ENCODE measurements at regions of chr2 and their contacts with region 1.

Region 1: DNA sequence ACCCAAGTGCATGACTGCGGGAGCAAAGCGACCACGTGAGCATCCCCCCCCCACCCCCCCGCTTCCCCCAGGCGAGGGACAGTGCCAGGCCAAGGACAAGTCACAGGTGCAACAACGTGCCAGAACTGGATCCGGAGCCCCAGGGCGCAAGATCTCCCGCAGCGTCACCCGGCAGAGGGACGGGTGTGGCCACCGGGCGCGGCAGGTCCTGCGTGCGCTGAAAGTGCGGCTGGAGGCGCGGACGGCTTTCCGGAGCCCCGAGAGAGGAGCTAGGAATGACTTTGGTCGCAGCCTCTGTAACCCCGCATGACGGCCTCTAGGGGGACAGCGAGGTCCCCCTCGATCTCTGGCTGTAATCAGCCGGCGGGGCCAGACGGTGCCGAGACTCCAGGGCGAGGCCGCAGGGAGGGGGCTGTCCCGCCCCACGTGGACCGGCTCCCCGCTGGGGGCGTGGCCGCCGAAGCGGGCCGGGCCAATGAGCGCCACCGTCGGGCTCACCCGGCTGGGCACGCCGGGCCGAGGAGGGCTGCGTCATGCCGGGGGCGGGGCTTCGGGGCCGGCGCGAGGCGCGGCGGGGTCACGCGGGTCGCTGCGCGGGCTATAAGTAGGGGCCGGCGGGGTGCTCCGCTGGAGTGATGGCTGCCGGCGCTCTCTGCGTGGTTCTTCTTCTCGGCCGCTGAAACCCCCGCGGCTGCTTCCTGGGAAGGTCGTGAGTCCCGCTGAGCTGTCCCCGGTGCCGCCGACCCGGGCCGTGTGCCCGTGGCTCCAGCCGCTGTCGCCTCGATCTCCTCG is at the start of gene SLC20A1:
- DNase-seq: peak; percentile 98
- H3K4me3 Mint-ChIP-seq: peak within 1 kb of the TSS; percentile 97
- H3K27ac Mint-ChIP-seq: peak within 1 kb of the TSS; percentile 86
- H3K4me1 Mint-ChIP-seq: peaks cover 65% of the 10 kb centered on the region
- H3K27me3 Mint-ChIP-seq: no peaks in the 10 kb centered on the region
- total RNA-seq, gene SLC20A1: 152 to 158 TPM

Region 2: DNA sequence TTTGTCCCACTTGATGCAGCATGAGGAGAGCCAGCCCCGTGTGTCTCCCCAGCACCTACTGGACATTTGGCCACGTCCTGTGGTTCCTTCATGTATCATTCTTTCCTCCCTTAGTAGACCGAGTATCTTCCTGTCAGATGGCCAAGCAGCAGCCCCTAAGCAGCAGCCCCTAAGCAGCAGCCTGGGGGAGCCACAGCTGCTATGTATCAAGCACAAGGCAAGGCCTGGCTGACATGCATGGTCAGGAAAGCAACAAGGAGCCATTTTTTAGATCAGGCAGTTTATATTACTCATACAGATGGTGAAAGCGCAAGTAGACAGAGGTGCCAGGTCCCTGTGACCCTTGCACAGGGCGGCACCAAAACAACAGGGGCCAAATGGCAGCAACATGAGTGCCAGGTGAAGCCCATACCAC is 39.0 kb before region 1 on chr2:
- CTCF ChIA-PET with region 1: interaction called, 5 read pairs
- POLR2A ChIA-PET with region 1: interaction called, 29 read pairs
- DNase-seq: no peak
- H3K4me3 Mint-ChIP-seq: no peak overlapping the region
- H3K27ac Mint-ChIP-seq: no peak overlapping the region
- H3K4me1 Mint-ChIP-seq: peaks cover 7% of the 10 kb centered on the region
- H3K27me3 Mint-ChIP-seq: peaks cover 17% of the 10 kb centered on the region

Region 3: DNA sequence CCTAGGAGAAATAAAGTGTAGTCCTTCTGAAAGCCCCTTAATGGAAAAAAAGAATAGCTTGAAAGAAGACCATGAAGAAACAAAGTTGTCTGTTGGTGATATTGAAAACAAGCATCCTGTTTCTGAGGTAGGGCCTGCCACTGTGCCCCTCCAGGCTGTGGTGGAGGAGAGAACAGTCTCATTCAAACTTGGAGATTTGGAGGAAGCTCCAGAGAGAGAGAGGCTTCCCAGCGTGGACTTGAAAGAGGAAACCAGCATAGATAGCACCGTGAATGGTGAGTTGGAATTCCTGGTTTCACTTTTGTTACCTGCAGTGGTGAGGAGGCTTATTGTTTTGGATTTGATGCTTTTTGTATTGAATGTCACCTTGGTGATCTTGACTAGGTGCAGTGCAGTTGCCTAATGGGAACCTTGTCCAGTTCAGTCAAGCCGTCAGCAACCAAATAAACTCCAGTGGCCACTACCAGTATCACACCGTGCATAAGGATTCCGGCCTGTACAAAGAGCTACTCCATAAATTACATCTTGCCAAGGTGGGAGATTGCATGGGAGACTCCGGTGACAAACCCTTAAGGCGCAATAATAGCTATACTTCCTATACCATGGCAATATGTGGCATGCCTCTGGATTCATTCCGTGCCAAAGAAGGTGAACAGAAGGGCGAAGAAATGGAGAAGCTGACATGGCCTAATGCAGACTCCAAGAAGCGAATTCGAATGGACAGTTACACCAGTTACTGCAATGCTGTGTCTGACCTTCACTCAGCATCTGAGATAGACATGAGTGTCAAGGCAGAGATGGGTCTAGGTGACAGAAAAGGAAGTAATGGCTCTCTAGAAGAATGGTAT is 13.5 kb after region 1 on chr2:
- CTCF ChIA-PET with region 1: interaction called, 3 read pairs
- POLR2A ChIA-PET with region 1: interaction called, 73 read pairs
- DNase-seq: no peak
- H3K4me3 Mint-ChIP-seq: no peak overlapping the region
- H3K27ac Mint-ChIP-seq: peak overlapping the region; percentile 71
- H3K4me1 Mint-ChIP-seq: peaks cover 77% of the 10 kb centered on the region
- H3K27me3 Mint-ChIP-seq: no peaks in the 10 kb centered on the region

Region 4: GRCh38 chr2:112685271-112685884 is 39.9 kb after region 1 on chr2:
- CTCF ChIA-PET with region 1: interaction called, 6 read pairs
- POLR2A ChIA-PET with region 1: interaction called, 42 read pairs
- DNase-seq: no peak
- H3K4me3 Mint-ChIP-seq: no peak overlapping the region
- H3K27ac Mint-ChIP-seq: no peak overlapping the region
- H3K4me1 Mint-ChIP-seq: peaks cover 36% of the 10 kb centered on the region
- H3K27me3 Mint-ChIP-seq: no peaks in the 10 kb centered on the region

Region 5: DNA sequence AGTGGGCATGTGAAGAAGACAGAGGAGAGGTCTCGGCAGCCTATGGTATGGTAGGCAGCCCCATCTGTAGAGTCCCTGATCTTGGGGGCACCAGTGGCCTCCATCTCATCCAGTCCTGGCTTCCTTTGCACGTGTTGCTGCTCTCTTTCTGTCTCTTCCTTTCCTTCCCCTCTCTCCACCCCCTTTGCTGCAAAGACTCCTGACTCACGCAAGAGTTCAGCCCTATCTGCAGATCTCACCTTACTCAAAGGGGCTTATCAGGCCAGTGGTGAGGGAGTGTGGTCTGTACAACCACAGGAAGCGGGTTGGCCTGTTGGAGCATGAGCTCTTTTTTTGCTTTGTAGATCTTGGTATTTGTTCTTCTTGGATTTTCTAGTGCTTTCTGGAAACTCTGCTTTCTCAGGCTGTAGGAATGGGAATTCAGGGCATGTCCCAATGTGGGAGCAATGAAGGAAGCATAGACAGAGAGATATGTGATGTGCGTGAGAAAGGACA is 60.7 kb after region 1 on chr2:
- CTCF ChIA-PET with region 1: no interaction called
- POLR2A ChIA-PET with region 1: interaction called, 21 read pairs
- DNase-seq: peak; percentile 93
- H3K4me3 Mint-ChIP-seq: peak overlapping the region; percentile 55
- H3K27ac Mint-ChIP-seq: peak overlapping the region; percentile 82
- H3K4me1 Mint-ChIP-seq: peaks cover 64% of the 10 kb centered on the region
- H3K27me3 Mint-ChIP-seq: peaks cover 3% of the 10 kb centered on the region

Region 6: GRCh38 chr2:113105047-113105785 is 459.7 kb after region 1 on chr2:
- CTCF ChIA-PET with region 1: no interaction called
- POLR2A ChIA-PET with region 1: no interaction called
- DNase-seq: peak; percentile 55
- H3K4me3 Mint-ChIP-seq: no peak overlapping the region
- H3K27ac Mint-ChIP-seq: peak overlapping the region; percentile 62
- H3K4me1 Mint-ChIP-seq: peaks cover 51% of the 10 kb centered on the region
- H3K27me3 Mint-ChIP-seq: peaks cover 4% of the 10 kb centered on the region